PC-9 (cell line): ENCODE measurements at regions of chr16 and their contacts with region 1.

Region 1: DNA sequence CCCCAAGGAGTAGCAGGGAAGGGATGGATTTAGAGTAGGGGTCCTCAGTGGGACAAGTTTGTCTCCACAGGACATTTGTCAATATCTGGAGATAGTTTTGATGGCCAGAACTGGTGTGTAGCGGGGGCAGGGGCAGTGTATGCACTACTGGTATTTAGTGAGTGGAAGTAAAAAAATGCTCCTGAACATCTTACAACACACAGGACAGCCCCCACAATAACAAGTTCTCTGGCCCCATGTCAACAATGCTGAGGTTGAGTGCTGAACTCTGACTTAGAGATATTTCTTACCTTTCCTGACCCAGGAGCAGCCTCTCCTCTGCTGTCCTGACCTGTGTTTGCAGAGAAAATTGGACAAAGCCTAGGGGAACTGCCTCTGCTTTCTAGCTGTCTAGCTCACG is 365.8 kb downstream of the HAPSTR1 start:
- DNase-seq: no peak
- H3K4me3 ChIP-seq: no peak overlapping the region
- H3K27ac ChIP-seq: no peak overlapping the region
- H3K4me1 ChIP-seq: no peaks in the 10 kb centered on the region
- H3K27me3 ChIP-seq: peaks cover 5% of the 10 kb centered on the region
- CTCF ChIP-seq: no peak

Region 2: DNA sequence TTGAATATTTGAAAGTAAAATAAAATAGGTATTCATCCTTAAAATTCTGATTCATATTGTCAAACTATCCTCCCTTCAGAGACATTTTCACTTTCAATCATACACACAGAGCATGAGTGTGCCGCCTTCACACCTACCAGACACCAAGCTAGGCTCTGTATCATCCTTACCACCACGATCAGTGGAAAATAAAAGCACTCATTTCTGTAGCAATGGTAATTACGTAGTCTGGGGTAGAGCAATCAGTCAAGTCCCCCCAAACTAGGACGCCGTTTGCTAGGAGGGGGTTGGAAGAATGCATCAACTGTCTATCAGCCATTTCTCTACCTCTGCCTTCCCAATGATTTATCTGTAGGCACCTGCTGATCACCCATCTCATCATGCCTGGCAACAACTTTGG is 809.6 kb after region 1 on chr16:
- CTCF ChIA-PET with region 1: interaction called, 11 read pairs
- POLR2A ChIA-PET with region 1: no interaction called
- intact Hi-C with region 1: no loop called
- DNase-seq: no peak
- H3K4me3 ChIP-seq: no peak overlapping the region
- H3K27ac ChIP-seq: no peak overlapping the region
- H3K4me1 ChIP-seq: no peaks in the 10 kb centered on the region
- H3K27me3 ChIP-seq: peaks cover 11% of the 10 kb centered on the region; the same call in 1 of the 2 replicates
- CTCF ChIP-seq: no peak

Region 3: GRCh38 chr16:10390330-10390729 is 933.1 kb after region 1 on chr16:
- CTCF ChIA-PET with region 1: no interaction called
- POLR2A ChIA-PET with region 1: no interaction called
- intact Hi-C with region 1: loop called (anchors 5 kb)
- DNase-seq: no peak
- H3K4me3 ChIP-seq: no peak overlapping the region
- H3K27ac ChIP-seq: no peak overlapping the region
- H3K4me1 ChIP-seq: no peaks in the 10 kb centered on the region
- H3K27me3 ChIP-seq: peaks cover 15% of the 10 kb centered on the region; the same call in 1 of the 2 replicates
- CTCF ChIP-seq: no peak